Breast epithelium (tissue), 4 donors: ENCODE measurements at regions of chr3 and their contacts with region 1.

Region 1: DNA sequence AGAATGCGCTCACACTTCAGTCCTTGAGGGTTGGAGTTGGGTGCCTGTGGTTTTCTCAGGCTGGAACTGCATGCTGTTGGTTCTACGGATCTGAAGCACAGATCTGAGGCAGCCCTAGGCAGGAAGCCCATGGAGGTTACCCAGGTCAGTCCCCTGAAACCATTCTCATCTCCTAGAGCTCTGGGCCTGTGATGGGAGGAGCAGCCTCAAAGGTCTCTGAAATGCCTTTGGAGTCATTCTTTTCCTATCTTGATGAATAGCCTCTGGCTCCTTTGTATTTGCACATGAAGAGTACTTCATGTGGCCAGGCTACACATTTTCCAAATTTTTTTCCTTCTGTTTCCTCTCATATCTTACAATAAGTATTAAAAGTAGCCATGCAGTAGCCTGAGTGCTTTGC is 179.3 kb upstream of the UBE2E1 start:
- DNase-seq: no peak
- H3K4me3 ChIP-seq: no peak overlapping the region
- H3K27ac ChIP-seq: no peak overlapping the region
- H3K4me1 ChIP-seq: no peaks in the 10 kb centered on the region
- H3K27me3 ChIP-seq: no peaks in the 10 kb centered on the region
- CTCF ChIP-seq: no peak
- POLR2A ChIP-seq: no peak

Region 2: DNA sequence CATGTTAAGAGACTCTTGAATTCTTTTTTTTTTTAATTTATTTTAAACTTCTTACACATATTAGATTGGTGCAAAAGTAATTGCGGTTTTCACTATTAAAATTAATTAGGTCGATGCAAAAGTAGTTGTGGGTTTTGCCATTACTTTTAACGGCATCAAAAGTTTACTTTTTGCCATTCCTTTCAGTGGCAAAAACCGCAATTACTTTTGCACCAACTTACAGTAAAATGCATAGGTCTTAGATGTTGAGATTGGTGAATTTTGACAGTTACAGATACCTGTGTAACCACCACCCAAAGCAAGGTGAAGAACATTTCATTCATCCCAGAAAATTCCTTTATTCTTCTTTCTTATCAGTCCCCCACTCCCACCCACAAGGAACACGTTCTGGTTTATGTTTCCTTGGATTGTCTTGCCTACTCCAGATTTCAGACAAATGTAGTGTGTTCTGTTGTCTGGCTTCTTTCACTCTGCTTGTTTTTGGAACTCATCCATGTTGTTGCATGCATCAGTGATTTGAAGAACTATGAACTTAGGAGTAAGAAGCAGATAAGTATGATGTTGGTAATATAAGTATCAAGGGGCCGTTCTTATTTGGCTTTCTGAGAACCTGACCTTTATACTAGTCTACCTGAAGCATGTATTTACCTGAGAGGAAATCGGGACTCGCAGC is 19.1 kb before region 1 on chr3:
- intact Hi-C with region 1: loop called (anchors 1 kb)
- DNase-seq: no peak
- H3K4me3 ChIP-seq: no peak overlapping the region
- H3K27ac ChIP-seq: no peak overlapping the region
- H3K4me1 ChIP-seq: no peaks in the 10 kb centered on the region
- H3K27me3 ChIP-seq: no peaks in the 10 kb centered on the region
- CTCF ChIP-seq: no peak
- POLR2A ChIP-seq: no peak